HepG2 (cell line): ENCODE measurements at regions of chr17 and their contacts with region 1.

Region 1: GRCh38 chr17:979538-980405 is at the start of gene NXN:
- DNase-seq: peak; percentile 47
- ATAC-seq: peak; percentile 73
- H3K4me3 ChIP-seq: peak within 1 kb of the TSS; percentile 67 to 85 (median 80)
- H3K27ac ChIP-seq: peak within 1 kb of the TSS; percentile 71
- H3K4me1 ChIP-seq: peaks cover 57% of the 10 kb centered on the region
- H3K27me3 ChIP-seq: no peaks in the 10 kb centered on the region
- CTCF ChIP-seq: peak; percentile 53
- EP300 ChIP-seq: no peak
- POLR2A ChIP-seq: peak; percentile 44 to 86
- RAD21 ChIP-seq: peak; percentile 75
- total RNA-seq, gene NXN: 21.3 and 22.2 TPM in 2 replicates

Region 2: GRCh38 chr17:794876-795275 is 184.9 kb before region 1 on chr17:
- CTCF ChIA-PET with region 1: interaction called, 10 read pairs
- POLR2A ChIA-PET with region 1: interaction called, 6 read pairs
- in situ Hi-C with region 1: no loop called
- intact Hi-C with region 1: loop called (anchors 2 kb)
- DNase-seq: peak; percentile 24
- ATAC-seq: peak; percentile 67
- H3K4me3 ChIP-seq: no peak overlapping the region
- H3K27ac ChIP-seq: no peak overlapping the region
- H3K4me1 ChIP-seq: no peaks in the 10 kb centered on the region
- H3K27me3 ChIP-seq: no peaks in the 10 kb centered on the region
- CTCF ChIP-seq: peak; percentile 83
- EP300 ChIP-seq: no peak
- POLR2A ChIP-seq: no peak
- RAD21 ChIP-seq: peak; percentile 68

Region 3: GRCh38 chr17:927611-928461 is 51.9 kb before region 1 on chr17:
- CTCF ChIA-PET with region 1: no interaction called
- POLR2A ChIA-PET with region 1: interaction called, 11 read pairs
- in situ Hi-C with region 1: no loop called
- intact Hi-C with region 1: no loop called
- DNase-seq: no peak
- ATAC-seq: no peak
- H3K4me3 ChIP-seq: no peak overlapping the region
- H3K27ac ChIP-seq: no peak overlapping the region
- H3K4me1 ChIP-seq: peaks cover 61% of the 10 kb centered on the region
- H3K27me3 ChIP-seq: no peaks in the 10 kb centered on the region
- CTCF ChIP-seq: no peak
- EP300 ChIP-seq: no peak
- POLR2A ChIP-seq: no peak
- RAD21 ChIP-seq: no peak

Region 4: DNA sequence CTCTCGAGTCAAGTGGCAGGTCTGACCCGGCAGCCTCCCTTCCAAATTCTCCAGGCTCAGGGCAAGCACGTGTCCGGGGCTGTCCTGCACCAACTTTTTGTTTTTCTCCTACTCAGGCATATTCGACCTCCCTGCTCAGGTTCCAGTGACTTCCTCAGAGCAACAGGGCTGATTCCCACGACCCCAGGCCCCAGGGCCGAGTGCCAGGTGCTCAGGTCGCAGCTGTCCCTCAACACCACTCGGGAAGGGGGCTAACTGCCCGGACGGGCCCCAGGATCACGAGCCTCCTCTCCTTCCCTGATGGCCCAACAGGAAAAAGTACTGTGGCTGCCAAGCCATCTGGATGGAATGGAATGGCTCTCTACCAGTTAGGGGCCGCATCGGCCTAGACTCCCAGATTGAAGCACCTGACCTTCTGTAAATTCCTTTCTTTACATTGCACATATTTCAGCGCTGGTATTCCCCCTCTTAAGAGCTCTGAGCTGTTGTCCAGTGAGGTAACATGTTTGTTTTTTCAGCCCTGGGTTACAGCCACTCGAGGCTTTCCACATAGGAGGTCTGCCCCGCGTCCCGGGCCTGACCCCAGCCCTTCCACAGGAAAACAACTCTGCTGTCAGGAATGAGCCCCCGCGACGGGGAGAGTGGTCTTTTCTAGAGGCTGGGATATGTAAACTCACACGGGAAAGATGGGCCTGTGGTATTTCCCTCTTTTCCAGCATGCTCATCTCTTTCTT is 25.2 kb before region 1 on chr17:
- CTCF ChIA-PET with region 1: no interaction called
- POLR2A ChIA-PET with region 1: interaction called, 12 read pairs
- in situ Hi-C with region 1: no loop called
- intact Hi-C with region 1: no loop called
- DNase-seq: peak; percentile 90
- ATAC-seq: peak; percentile 89
- H3K4me3 ChIP-seq: peak overlapping the region in 1 of 3 experiments; percentile 37; a peak in 2 of 6 replicates
- H3K27ac ChIP-seq: peak overlapping the region; percentile 43
- H3K4me1 ChIP-seq: peaks cover 33% of the 10 kb centered on the region
- H3K27me3 ChIP-seq: no peaks in the 10 kb centered on the region
- CTCF ChIP-seq: no peak
- EP300 ChIP-seq: 0 out of 4 replicates have a peak, but pooled peaks of 1 of the 2 experiments have one; percentile 32
- POLR2A ChIP-seq: peak in 1 of 2 experiments; percentile 50; a peak in 1 of 4 replicates
- RAD21 ChIP-seq: no peak

Region 5: GRCh38 chr17:1012408-1012761 is 32.6 kb after region 1 on chr17:
- CTCF ChIA-PET with region 1: no interaction called
- POLR2A ChIA-PET with region 1: no interaction called
- in situ Hi-C with region 1: no loop called
- intact Hi-C with region 1: no loop called
- DNase-seq: no peak
- ATAC-seq: no peak
- H3K4me3 ChIP-seq: no peak overlapping the region
- H3K27ac ChIP-seq: no peak overlapping the region
- H3K4me1 ChIP-seq: no peaks in the 10 kb centered on the region
- H3K27me3 ChIP-seq: no peaks in the 10 kb centered on the region
- CTCF ChIP-seq: no peak
- EP300 ChIP-seq: no peak
- POLR2A ChIP-seq: no peak
- RAD21 ChIP-seq: no peak

Region 6: DNA sequence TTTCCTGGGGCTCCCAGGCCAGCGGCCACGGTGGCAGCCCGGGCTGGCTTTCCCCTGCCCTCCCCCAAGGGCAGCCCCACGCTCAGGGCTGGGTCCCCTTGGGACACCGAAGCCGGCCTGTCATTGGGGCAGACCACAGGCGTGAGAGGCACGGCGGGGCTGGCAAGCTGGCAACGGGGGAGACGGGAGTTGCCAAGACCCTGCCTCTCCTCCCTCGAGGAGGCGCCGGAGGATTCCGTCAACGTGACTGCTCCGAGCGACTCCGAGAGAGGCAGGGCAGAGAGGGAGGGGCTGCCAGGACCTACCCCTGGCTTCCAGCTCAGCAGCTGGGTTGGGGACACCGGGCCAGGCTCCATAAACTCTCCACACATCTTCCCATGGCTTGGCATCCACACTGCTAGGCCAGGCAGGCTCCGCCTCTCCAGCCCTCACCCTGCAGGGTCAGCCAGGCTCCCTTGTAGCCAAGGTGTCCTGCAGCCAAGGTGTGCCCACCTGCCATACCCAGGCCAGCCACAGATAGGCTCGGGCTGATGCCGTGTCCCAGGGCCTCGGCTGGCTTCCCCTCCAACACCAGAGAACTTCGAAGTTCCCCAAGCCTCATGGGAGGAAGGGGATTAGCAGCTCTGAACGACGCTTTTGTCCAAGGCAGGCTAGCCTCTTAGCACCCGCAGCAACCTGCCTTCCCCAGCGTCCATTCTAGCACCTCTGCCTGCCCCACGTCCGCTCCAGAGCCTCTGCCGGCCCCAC is 42.7 kb after region 1 on chr17:
- CTCF ChIA-PET with region 1: no interaction called
- POLR2A ChIA-PET with region 1: no interaction called
- in situ Hi-C with region 1: no loop called
- intact Hi-C with region 1: no loop called
- DNase-seq: no peak
- ATAC-seq: no peak
- H3K4me3 ChIP-seq: no peak overlapping the region
- H3K27ac ChIP-seq: no peak overlapping the region
- H3K4me1 ChIP-seq: peaks cover 7% of the 10 kb centered on the region
- H3K27me3 ChIP-seq: no peaks in the 10 kb centered on the region
- CTCF ChIP-seq: no peak
- EP300 ChIP-seq: no peak
- POLR2A ChIP-seq: no peak
- RAD21 ChIP-seq: no peak